ENCODE measurements at regions of chr11 and their contacts with region 1.

Region 1: DNA sequence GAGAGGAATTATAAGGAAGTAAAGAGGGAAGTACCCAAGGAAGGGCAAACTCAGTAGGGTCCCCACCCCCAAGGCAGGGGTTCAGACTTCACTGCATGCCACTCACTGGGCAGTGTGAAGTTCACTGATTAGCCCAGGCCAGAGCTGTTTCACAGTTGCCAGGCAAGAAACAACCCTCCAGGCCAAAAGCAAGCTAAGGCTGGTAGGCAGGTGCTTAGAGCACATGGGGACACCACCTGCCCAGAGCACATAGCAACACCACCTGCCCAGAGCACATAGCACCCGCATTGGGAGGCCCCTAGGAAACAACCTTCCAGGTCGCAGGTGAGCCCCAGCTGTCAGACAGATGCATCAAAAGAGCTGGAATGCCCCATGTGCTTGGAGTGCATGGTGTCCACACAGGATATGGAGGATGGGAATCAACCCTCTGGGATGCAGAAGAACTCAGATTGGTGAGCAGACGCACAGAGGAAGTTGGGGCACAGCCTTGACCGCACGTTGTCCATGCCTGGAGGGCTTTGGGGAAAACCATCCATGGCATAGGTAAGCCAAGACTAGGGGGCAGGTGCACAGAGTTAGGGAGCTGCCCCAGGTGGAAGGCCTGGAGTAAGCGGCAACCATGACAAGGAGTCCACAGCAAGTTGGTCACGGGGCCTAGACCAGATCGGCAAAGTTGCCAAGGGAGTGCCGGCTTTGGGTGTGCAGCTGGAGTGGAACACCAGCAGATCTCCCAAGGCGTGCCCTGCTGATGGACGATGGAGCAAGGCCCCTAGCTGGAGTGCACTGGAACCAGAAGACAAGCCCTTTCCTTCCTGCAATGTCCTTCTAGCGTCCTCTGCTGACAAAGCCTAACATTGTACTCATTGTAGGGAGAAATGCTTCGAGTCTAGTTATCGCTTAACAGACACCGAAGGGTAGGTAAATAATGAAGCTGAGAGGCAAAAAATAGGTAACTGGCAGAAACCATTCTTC is 7.8 kb upstream of the TMEM216 start:
- DNase-seq: no peak
- H3K4me3 ChIP-seq: no peak overlapping the region
- H3K27me3 ChIP-seq: no peaks in the 10 kb centered on the region
- CTCF ChIP-seq: peak; percentile 25; the same call in 1 of the 2 replicates

Region 2: GRCh38 chr11:61254403-61255025 is 130.0 kb before region 1 on chr11:
- CTCF ChIA-PET with region 1: interaction called, 41 read pairs
- POLR2A ChIA-PET with region 1: no interaction called
- DNase-seq: no peak
- H3K4me3 ChIP-seq: no peak overlapping the region
- H3K27me3 ChIP-seq: peaks cover 2% of the 10 kb centered on the region; the same call in 1 of the 2 replicates
- CTCF ChIP-seq: peak; percentile 97

Region 3: GRCh38 chr11:61327669-61328071 is 56.9 kb before region 1 on chr11:
- CTCF ChIA-PET with region 1: interaction called, 374 read pairs
- POLR2A ChIA-PET with region 1: no interaction called
- DNase-seq: peak; percentile 36
- H3K4me3 ChIP-seq: no peak overlapping the region
- H3K27me3 ChIP-seq: no peaks in the 10 kb centered on the region
- CTCF ChIP-seq: no peak

Region 4: GRCh38 chr11:61347916-61348461 is 36.6 kb before region 1 on chr11:
- CTCF ChIA-PET with region 1: interaction called, 374 read pairs
- POLR2A ChIA-PET with region 1: no interaction called
- DNase-seq: no peak
- H3K4me3 ChIP-seq: no peak overlapping the region
- H3K27me3 ChIP-seq: no peaks in the 10 kb centered on the region
- CTCF ChIP-seq: no peak

Region 5: GRCh38 chr11:61361686-61362541 is 22.6 kb before region 1 on chr11 and contains the starts of genes CYB561A3 and TMEM138:
- CTCF ChIA-PET with region 1: interaction called, 49 read pairs
- POLR2A ChIA-PET with region 1: interaction called, 3 read pairs
- DNase-seq: peak; percentile 73
- H3K4me3 ChIP-seq: peak within 1 kb of the TSS; percentile 77
- H3K27me3 ChIP-seq: no peaks in the 10 kb centered on the region
- CTCF ChIP-seq: no peak
- polyA plus RNA-seq, gene CYB561A3: 32.9 and 91.3 TPM in 2 replicates
- polyA plus RNA-seq, gene TMEM138: 55.6 and 73.9 TPM in 2 replicates

Region 6: GRCh38 chr11:61369372-61370219 is 15.0 kb before region 1 on chr11:
- CTCF ChIA-PET with region 1: interaction called, 49 read pairs
- POLR2A ChIA-PET with region 1: no interaction called
- DNase-seq: no peak
- H3K4me3 ChIP-seq: no peak overlapping the region
- H3K27me3 ChIP-seq: no peaks in the 10 kb centered on the region
- CTCF ChIP-seq: no peak